Activated CD4-positive, alpha-beta T cell treated with anti-CD3 and anti-CD28 coated beads, Interleukin-2, amount 10 ng/mL, durations not matched to agents 24 days and 14 days (primary cell): ENCODE measurements at regions of chr10 and their contacts with region 1.

Region 1: GRCh38 chr10:17200912-17201793 is at the start of gene TRDMT1:
- DNase-seq: peak; percentile 96
- H3K4me3 Mint-ChIP-seq: peak within 1 kb of the TSS; percentile 95
- H3K27ac Mint-ChIP-seq: peak within 1 kb of the TSS; percentile 92
- H3K4me1 Mint-ChIP-seq: peaks cover 33% of the 10 kb centered on the region
- H3K27me3 Mint-ChIP-seq: no peaks in the 10 kb centered on the region
- total RNA-seq, gene TRDMT1: 3.9 and 5.6 TPM in 2 replicates

Region 2: DNA sequence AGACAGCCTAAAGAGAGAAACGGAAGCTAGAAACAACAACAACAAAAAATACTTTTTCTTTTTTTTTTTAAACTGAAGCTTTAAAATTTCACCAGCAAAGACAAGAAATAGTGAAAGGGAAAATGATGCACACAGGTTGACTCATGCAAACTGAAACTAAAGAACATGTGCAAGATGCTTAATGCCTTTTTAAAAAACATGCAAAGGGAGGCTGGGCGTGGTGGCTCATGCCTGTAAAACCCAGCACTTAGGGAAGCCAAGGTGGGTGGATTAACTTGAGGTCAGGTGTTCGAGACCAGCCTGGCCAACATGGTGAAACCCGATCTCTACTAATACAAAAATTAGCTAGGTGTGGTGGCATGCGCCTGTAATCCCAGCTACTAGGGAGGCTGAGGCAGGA is 56.4 kb before region 1 on chr10:
- intact Hi-C with region 1: loop called (anchors 1 kb)
- DNase-seq: peak; percentile 85
- H3K4me3 Mint-ChIP-seq: no peak overlapping the region
- H3K27ac Mint-ChIP-seq: peak overlapping the region; percentile 61
- H3K4me1 Mint-ChIP-seq: peaks cover 23% of the 10 kb centered on the region
- H3K27me3 Mint-ChIP-seq: peaks cover 5% of the 10 kb centered on the region

Region 3: GRCh38 chr10:17216217-17216900 is 15.2 kb after region 1 on chr10:
- intact Hi-C with region 1: loop called (anchors 1 kb)
- DNase-seq: peak; percentile 86
- H3K4me3 Mint-ChIP-seq: peak overlapping the region; percentile 8
- H3K27ac Mint-ChIP-seq: peak overlapping the region; percentile 88
- H3K4me1 Mint-ChIP-seq: peaks cover 32% of the 10 kb centered on the region
- H3K27me3 Mint-ChIP-seq: no peaks in the 10 kb centered on the region

Region 4: DNA sequence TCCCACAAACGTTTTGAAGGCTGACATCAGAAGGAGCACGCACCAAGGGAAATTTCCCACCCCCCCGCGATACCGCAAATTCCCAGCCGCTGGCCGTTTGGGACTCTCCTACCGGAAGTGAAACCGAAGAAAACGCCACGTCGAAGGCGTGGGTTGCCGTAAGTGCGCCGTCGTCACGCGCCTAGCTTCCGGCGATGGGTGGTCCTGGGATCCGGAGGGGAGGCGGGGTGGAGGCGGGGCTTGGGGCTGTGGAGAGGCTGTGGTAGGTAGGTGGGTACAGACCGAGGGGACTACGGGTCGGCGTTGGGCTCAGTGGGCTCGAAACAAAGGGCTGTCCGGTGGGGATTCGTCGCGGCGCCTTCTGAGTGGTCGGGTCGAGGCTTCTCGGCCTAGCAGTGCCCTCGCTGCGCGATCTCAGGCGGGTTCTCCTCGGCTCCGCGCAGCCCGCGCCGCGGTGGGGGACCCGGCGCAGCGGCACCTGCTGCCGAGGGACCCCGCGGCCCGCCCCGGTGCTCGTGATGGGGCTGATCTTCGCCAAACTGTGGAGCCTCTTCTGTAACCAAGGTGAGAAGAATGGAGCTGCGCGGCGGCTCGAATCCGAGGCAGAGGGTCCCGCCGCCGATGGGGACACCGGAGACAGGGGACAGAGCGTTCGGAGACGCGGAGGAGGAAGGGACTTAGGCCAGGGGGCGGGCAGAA is 1458.1 kb after region 1 on chr10 and contains the start of gene ARL5B:
- intact Hi-C with region 1: loop called (anchors 10 kb)
- DNase-seq: peak; percentile 98
- H3K4me3 Mint-ChIP-seq: peak within 1 kb of the TSS; percentile 96
- H3K27ac Mint-ChIP-seq: peak within 1 kb of the TSS; percentile 97
- H3K4me1 Mint-ChIP-seq: peaks cover 35% of the 10 kb centered on the region
- H3K27me3 Mint-ChIP-seq: no peaks in the 10 kb centered on the region
- total RNA-seq, gene ARL5B: 17.0 and 17.5 TPM in 2 replicates